Activated CD8-positive, alpha-beta T cell treated with anti-CD3 and anti-CD28 coated beads, Interleukin-2, amount 10 ng/mL, durations not matched to agents 7 days and 5 days (primary cell): ENCODE measurements at regions of chr9 and their contacts with region 1.

Region 1: GRCh38 chr9:97632985-97633858 is at the starts of genes NCBP1 and TSTD2:
- DNase-seq: peak; percentile 97
- ATAC-seq: peak; percentile 92
- H3K4me3 Mint-ChIP-seq: peak within 1 kb of the TSS; percentile 86
- H3K27ac Mint-ChIP-seq: peak within 1 kb of the TSS; percentile 100
- H3K4me1 Mint-ChIP-seq: peaks cover 29% of the 10 kb centered on the region
- H3K27me3 Mint-ChIP-seq: no peaks in the 10 kb centered on the region
- total RNA-seq, gene NCBP1: 45.1 to 45.9 TPM
- total RNA-seq, gene TSTD2: 13.0 to 15.6 TPM

Region 2: DNA sequence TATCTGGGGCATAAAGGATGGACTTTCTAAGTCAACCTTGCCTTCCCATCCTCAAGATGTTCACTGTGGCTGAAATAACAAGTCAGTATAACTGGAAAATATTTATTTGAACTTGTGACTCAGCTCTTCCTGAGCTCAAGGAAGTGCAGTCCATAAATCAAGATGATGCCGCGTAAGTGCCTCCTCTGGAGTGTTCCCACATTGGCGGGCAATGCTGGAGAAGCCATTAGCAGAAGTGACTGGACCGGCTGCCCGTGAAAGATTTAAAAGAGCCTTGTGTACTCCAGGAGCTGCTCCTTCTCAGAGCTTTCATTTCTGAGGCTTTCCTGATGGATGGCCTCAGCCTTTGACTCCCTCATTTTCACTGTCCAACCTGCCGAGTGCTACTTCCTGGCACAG is 114.3 kb before region 1 on chr9:
- CTCF ChIA-PET with region 1: no interaction called
- POLR2A ChIA-PET with region 1: no interaction called
- DNase-seq: no peak
- ATAC-seq: no peak
- H3K4me3 Mint-ChIP-seq: no peak overlapping the region
- H3K27ac Mint-ChIP-seq: no peak overlapping the region
- H3K4me1 Mint-ChIP-seq: no peaks in the 10 kb centered on the region
- H3K27me3 Mint-ChIP-seq: peaks cover 37% of the 10 kb centered on the region

Region 3: DNA sequence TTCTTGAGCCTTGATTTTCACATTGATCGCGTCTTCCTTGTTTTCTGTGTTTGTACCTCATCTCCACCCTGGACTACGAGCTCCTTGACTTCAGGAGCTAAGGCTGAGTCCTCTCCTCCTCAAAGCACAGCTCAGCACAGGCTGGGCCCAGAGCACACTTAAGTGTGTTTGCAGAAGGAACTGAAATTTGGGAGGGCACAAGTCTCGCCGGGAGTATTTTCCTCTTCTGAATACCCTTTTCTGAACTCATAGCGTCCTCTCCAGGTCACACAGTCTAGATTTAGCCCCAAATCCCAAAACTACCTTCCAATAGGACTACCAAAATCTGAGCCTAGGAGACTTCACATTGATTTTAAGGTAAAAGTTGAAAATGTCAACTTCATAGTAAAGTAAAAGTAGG is 41.7 kb before region 1 on chr9:
- CTCF ChIA-PET with region 1: no interaction called
- POLR2A ChIA-PET with region 1: no interaction called
- DNase-seq: no peak
- ATAC-seq: no peak
- H3K4me3 Mint-ChIP-seq: no peak overlapping the region
- H3K27ac Mint-ChIP-seq: no peak overlapping the region
- H3K4me1 Mint-ChIP-seq: peaks cover 2% of the 10 kb centered on the region
- H3K27me3 Mint-ChIP-seq: peaks cover 5% of the 10 kb centered on the region

Region 4: GRCh38 chr9:97645720-97646119 is 12.5 kb after region 1 on chr9:
- CTCF ChIA-PET with region 1: interaction called, 10 read pairs
- POLR2A ChIA-PET with region 1: interaction called, 8 read pairs
- DNase-seq: no peak
- ATAC-seq: no peak
- H3K4me3 Mint-ChIP-seq: no peak overlapping the region
- H3K27ac Mint-ChIP-seq: no peak overlapping the region
- H3K4me1 Mint-ChIP-seq: no peaks in the 10 kb centered on the region
- H3K27me3 Mint-ChIP-seq: no peaks in the 10 kb centered on the region

Region 5: DNA sequence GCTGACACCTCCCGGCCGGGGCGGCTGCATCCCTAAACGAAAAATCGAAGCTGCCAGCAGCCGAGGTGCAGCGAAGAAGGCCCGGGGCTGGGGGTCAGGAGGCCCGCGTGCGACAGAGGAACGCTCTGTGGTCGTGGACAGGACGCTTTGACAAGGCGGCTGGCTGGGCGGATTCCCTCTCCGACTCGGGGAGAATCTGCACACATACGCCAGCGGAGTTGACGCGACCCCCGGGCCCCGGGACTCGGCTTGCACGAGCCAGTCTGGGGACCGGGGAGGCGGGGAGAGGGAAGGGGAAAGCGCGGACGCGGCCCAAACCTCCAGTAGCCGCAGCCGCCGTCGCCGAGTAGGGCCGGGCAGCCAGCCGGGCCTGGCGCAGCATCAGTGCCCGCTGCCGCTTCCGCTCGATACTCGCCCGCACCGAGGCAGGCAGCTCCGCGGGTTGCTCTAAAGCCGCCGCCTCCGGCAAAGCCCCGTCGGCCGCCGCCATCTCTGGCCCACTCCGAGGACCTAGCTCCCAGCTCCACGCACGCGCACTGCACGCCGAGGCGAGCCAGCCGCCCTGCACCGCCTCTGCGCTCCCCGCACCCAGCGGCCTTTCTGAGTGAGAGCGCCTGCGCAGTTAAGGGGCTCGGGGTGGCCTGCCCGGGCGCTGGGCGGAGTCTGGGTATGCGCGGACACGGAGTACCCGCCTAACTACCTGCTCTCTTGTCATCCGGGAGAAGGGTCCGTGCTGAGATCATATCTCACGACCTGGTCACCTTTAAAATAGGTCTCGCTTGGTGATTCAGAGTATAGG is 63.8 kb after region 1 on chr9 and contains the start of gene XPA:
- CTCF ChIA-PET with region 1: interaction called, 3 read pairs
- POLR2A ChIA-PET with region 1: interaction called, 17 read pairs
- DNase-seq: peak; percentile 97
- ATAC-seq: peak; percentile 98
- H3K4me3 Mint-ChIP-seq: peak within 1 kb of the TSS; percentile 81
- H3K27ac Mint-ChIP-seq: peak within 1 kb of the TSS; percentile 88
- H3K4me1 Mint-ChIP-seq: peaks cover 55% of the 10 kb centered on the region
- H3K27me3 Mint-ChIP-seq: peaks cover 9% of the 10 kb centered on the region
- total RNA-seq, gene XPA: 10.2 TPM